Endothelial cell of umbilical vein (primary cell): ENCODE measurements at regions of chr7 and their contacts with region 1.

Region 1: DNA sequence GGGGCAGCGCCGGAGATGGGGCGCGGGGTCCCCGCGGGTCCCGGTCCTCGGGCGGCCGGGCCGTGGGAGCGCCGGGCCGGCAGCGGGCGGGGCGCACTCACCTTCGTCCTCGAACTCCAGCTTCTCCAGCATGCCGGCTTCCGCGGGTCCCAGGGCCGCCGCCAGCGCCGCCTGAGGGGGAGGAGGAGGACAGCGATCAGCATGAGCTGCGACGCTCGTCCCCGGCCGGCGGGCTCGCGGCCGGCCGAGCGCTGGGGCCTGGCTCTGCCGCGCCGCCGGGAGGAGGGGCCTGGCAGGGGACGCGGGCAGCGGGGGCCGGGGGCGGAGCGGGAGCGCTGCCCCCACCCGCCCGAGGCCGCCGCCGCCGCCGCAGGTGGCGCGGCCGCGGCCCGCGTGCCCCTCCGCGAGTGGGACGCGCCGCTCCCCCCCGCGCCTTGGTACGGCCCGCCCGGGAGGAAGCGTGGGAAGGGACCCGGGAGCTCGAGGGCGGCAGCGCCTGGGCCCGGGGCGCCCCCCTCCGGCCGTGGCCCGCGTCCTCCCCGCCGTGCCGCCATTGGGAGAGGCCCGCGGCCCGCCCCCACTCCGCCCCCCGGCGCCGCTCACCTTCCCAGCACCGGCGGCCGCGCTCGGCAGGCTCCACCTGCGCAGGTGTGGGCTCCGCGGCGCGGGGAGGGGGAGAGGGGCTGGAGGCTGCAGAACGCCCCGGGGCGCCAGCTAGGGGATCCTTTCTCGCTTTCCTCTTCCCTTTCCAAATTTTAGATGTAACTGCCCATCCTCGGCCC is 112.5 kb upstream of the RHEB start:
- DNase-seq: peak; percentile 68
- H3K4me3 ChIP-seq: peak overlapping the region; percentile 97 to 100 (median 99)
- H3K27ac ChIP-seq: peak overlapping the region; percentile 66
- H3K4me1 ChIP-seq: peaks cover 22% of the 10 kb centered on the region
- H3K27me3 ChIP-seq: no peaks in the 10 kb centered on the region
- CTCF ChIP-seq: peak; percentile 33 to 40
- POLR2A ChIP-seq: peak; percentile 74

Region 2: GRCh38 chr7:151519765-151520418 is 112.3 kb before region 1 on chr7 and contains the start of gene RHEB:
- CTCF ChIA-PET with region 1: interaction called, 8 read pairs
- POLR2A ChIA-PET with region 1: no interaction called
- dilution Hi-C with region 1: no loop called
- intact Hi-C with region 1: loop called (anchors 1 kb)
- DNase-seq: peak; percentile 99
- H3K4me3 ChIP-seq: peak within 1 kb of the TSS; percentile 75 to 96 (median 94)
- H3K27ac ChIP-seq: peak within 1 kb of the TSS; percentile 86
- H3K4me1 ChIP-seq: peaks cover 15% of the 10 kb centered on the region
- H3K27me3 ChIP-seq: peaks cover 0 to 2% of the 10 kb centered on the region in 2 experiments
- CTCF ChIP-seq: no peak
- POLR2A ChIP-seq: no peak
- total RNA-seq, gene RHEB: 108 and 109 TPM in 2 replicates

Region 3: GRCh38 chr7:151592868-151593486 is 39.2 kb before region 1 on chr7:
- CTCF ChIA-PET with region 1: interaction called, 23 read pairs
- POLR2A ChIA-PET with region 1: no interaction called
- dilution Hi-C with region 1: no loop called
- intact Hi-C with region 1: no loop called
- DNase-seq: peak; percentile 76
- H3K4me3 ChIP-seq: no peak overlapping the region
- H3K27ac ChIP-seq: peak overlapping the region; percentile 36
- H3K4me1 ChIP-seq: peaks cover 39% of the 10 kb centered on the region
- H3K27me3 ChIP-seq: no peaks in the 10 kb centered on the region
- CTCF ChIP-seq: no peak
- POLR2A ChIP-seq: no peak

Region 4: GRCh38 chr7:151687523-151688218 is 55.5 kb after region 1 on chr7:
- CTCF ChIA-PET with region 1: interaction called, 10 read pairs
- POLR2A ChIA-PET with region 1: no interaction called
- dilution Hi-C with region 1: no loop called
- intact Hi-C with region 1: loop called (anchors 2 kb)
- DNase-seq: peak; percentile 86
- H3K4me3 ChIP-seq: no peak overlapping the region
- H3K27ac ChIP-seq: peak overlapping the region; percentile 70
- H3K4me1 ChIP-seq: peaks cover 24% of the 10 kb centered on the region
- H3K27me3 ChIP-seq: no peaks in the 10 kb centered on the region
- CTCF ChIP-seq: no peak
- POLR2A ChIP-seq: peak; percentile 46

Region 5: DNA sequence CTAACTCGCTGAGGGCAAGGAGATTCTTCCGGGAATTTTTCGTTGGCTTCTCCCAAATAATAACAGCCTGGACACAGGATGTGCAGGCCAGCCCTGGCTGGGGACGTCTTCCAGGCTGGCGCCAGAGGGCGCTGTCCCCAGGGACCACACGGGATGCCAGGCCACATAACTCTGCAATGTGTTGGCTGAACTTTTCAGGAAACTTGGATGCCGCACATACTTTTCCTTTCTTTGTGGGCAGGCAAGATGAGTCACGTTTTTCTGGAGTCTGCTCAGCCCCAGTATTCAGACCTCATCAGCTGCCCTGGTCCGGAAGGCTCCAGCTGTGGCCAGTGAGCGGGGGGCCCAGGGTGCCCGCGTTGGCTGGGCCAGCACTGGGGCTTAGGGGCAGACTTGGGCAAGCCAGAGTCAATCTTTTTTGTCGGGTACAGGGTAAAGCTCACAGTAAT is 122.0 kb after region 1 on chr7:
- CTCF ChIA-PET with region 1: interaction called, 50 read pairs
- POLR2A ChIA-PET with region 1: no interaction called
- dilution Hi-C with region 1: no loop called
- intact Hi-C with region 1: loop called (anchors 1 kb)
- DNase-seq: peak; percentile 97
- H3K4me3 ChIP-seq: no peak overlapping the region
- H3K27ac ChIP-seq: peak overlapping the region; percentile 83
- H3K4me1 ChIP-seq: peaks cover 18% of the 10 kb centered on the region
- H3K27me3 ChIP-seq: no peaks in the 10 kb centered on the region
- CTCF ChIP-seq: peak; percentile 97 to 99
- POLR2A ChIP-seq: peak; percentile 66

Region 6: GRCh38 chr7:151833691-151834090 is 201.5 kb after region 1 on chr7:
- CTCF ChIA-PET with region 1: no interaction called
- POLR2A ChIA-PET with region 1: no interaction called
- dilution Hi-C with region 1: no loop called
- intact Hi-C with region 1: no loop called
- DNase-seq: no peak
- H3K4me3 ChIP-seq: no peak overlapping the region
- H3K27ac ChIP-seq: no peak overlapping the region
- H3K4me1 ChIP-seq: no peaks in the 10 kb centered on the region
- H3K27me3 ChIP-seq: peaks cover 0 to 1% of the 10 kb centered on the region in 2 experiments
- CTCF ChIP-seq: no peak
- POLR2A ChIP-seq: no peak